Natural killer cell (primary cell): ENCODE measurements at regions of chr7 and their contacts with region 1.

Region 1: DNA sequence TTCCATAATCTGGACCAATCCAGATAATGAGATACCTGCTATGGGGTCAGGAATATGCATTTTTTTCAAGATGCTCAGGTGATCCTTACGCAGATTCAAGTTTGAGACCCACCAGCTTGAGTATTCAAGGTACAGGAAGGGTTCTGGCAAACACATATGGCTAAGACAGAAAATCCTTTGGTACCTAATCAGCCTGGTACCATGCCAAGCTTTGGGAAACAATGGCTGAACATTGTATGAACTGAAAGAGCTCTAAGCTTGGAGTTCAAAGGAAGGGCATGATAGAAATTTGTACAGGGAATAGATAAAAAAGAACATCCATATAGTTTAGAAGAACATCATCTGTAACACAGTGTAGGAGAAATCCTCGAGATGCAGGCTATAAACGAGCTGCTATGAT is 382.7 kb downstream of the THSD7A start:
- DNase-seq: no peak
- ATAC-seq: no peak
- H3K4me3 ChIP-seq: no peak overlapping the region
- H3K4me3 Mint-ChIP-seq: no peak overlapping the region
- H3K27ac ChIP-seq: no peak overlapping the region
- H3K27ac Mint-ChIP-seq: no peak overlapping the region
- H3K4me1 ChIP-seq: no peaks in the 10 kb centered on the region
- H3K4me1 Mint-ChIP-seq: no peaks in the 10 kb centered on the region
- H3K27me3 ChIP-seq: no peaks in the 10 kb centered on the region
- H3K27me3 Mint-ChIP-seq: no peaks in the 10 kb centered on the region
- CTCF ChIP-seq: no peak

Region 2: GRCh38 chr7:11082552-11083213 is 366.6 kb before region 1 on chr7:
- intact Hi-C with region 1: no loop called
- DNase-seq: no peak
- ATAC-seq: no peak
- H3K4me3 ChIP-seq: no peak overlapping the region
- H3K4me3 Mint-ChIP-seq: no peak overlapping the region
- H3K27ac ChIP-seq: no peak overlapping the region
- H3K27ac Mint-ChIP-seq: no peak overlapping the region
- H3K4me1 ChIP-seq: no peaks in the 10 kb centered on the region
- H3K4me1 Mint-ChIP-seq: peaks cover 0 to 4% of the 10 kb centered on the region in 2 donors
- H3K27me3 ChIP-seq: no peaks in the 10 kb centered on the region
- H3K27me3 Mint-ChIP-seq: no peaks in the 10 kb centered on the region
- CTCF ChIP-seq: no peak

Region 3: GRCh38 chr7:11469028-11469745 is 19.9 kb after region 1 on chr7:
- intact Hi-C with region 1: loop called (anchors 2 kb)
- DNase-seq: no peak
- ATAC-seq: no peak
- H3K4me3 ChIP-seq: no peak overlapping the region
- H3K4me3 Mint-ChIP-seq: no peak overlapping the region
- H3K27ac ChIP-seq: no peak overlapping the region
- H3K27ac Mint-ChIP-seq: no peak overlapping the region
- H3K4me1 ChIP-seq: no peaks in the 10 kb centered on the region
- H3K4me1 Mint-ChIP-seq: no peaks in the 10 kb centered on the region
- H3K27me3 ChIP-seq: no peaks in the 10 kb centered on the region
- H3K27me3 Mint-ChIP-seq: no peaks in the 10 kb centered on the region
- CTCF ChIP-seq: no peak

Region 4: GRCh38 chr7:11935905-11936304 is 486.6 kb after region 1 on chr7:
- intact Hi-C with region 1: no loop called
- DNase-seq: no peak
- ATAC-seq: no peak
- H3K4me3 ChIP-seq: no peak overlapping the region
- H3K4me3 Mint-ChIP-seq: no peak overlapping the region
- H3K27ac ChIP-seq: no peak overlapping the region
- H3K27ac Mint-ChIP-seq: no peak overlapping the region
- H3K4me1 ChIP-seq: no peaks in the 10 kb centered on the region
- H3K4me1 Mint-ChIP-seq: no peaks in the 10 kb centered on the region
- H3K27me3 ChIP-seq: no peaks in the 10 kb centered on the region
- H3K27me3 Mint-ChIP-seq: no peaks in the 10 kb centered on the region
- CTCF ChIP-seq: no peak